ENCODE measurements at regions of chr2 and their contacts with region 1.

Region 1: GRCh38 chr2:205885492-205886099 is 200.4 kb downstream of the INO80D start:
- DNase-seq: peak; percentile 72
- ATAC-seq: peak; percentile 94
- H3K4me3 ChIP-seq: no peak overlapping the region
- H3K27ac ChIP-seq: no peak overlapping the region
- H3K4me1 ChIP-seq: no peaks in the 10 kb centered on the region
- H3K27me3 ChIP-seq: peaks cover 6% of the 10 kb centered on the region
- CTCF ChIP-seq: peak; percentile 93
- POLR2A ChIP-seq: no peak
- RAD21 ChIP-seq: peak; percentile 95

Region 2: GRCh38 chr2:205776139-205776538 is 109.5 kb before region 1 on chr2:
- CTCF ChIA-PET with region 1: no interaction called
- POLR2A ChIA-PET with region 1: no interaction called
- dilution Hi-C with region 1: no loop called
- in situ Hi-C with region 1: loop called (anchors 10 kb)
- intact Hi-C with region 1: no loop called
- DNase-seq: no peak
- ATAC-seq: no peak
- H3K4me3 ChIP-seq: no peak overlapping the region
- H3K27ac ChIP-seq: no peak overlapping the region
- H3K4me1 ChIP-seq: peaks cover 13% of the 10 kb centered on the region
- H3K27me3 ChIP-seq: peaks cover 8% of the 10 kb centered on the region
- CTCF ChIP-seq: peak; percentile 47
- POLR2A ChIP-seq: no peak
- RAD21 ChIP-seq: peak; percentile 55

Region 3: GRCh38 chr2:206004004-206004693 is 118.6 kb after region 1 on chr2:
- CTCF ChIA-PET with region 1: no interaction called
- POLR2A ChIA-PET with region 1: no interaction called
- dilution Hi-C with region 1: no loop called
- in situ Hi-C with region 1: no loop called
- intact Hi-C with region 1: no loop called
- DNase-seq: peak; percentile 18
- ATAC-seq: peak; percentile 42; the same call in 1 of the 2 replicates
- H3K4me3 ChIP-seq: no peak overlapping the region
- H3K27ac ChIP-seq: no peak overlapping the region
- H3K4me1 ChIP-seq: peaks cover 3% of the 10 kb centered on the region
- H3K27me3 ChIP-seq: no peaks in the 10 kb centered on the region
- CTCF ChIP-seq: peak; percentile 27; the same call in 1 of the 2 replicates
- POLR2A ChIP-seq: no peak
- RAD21 ChIP-seq: peak; percentile 46